Activated CD4-positive, alpha-beta memory T cell treated with anti-CD3 and anti-CD28 coated beads for 36 hours (primary cell): ENCODE measurements at regions of chr6 and their contacts with region 1.

Region 1: DNA sequence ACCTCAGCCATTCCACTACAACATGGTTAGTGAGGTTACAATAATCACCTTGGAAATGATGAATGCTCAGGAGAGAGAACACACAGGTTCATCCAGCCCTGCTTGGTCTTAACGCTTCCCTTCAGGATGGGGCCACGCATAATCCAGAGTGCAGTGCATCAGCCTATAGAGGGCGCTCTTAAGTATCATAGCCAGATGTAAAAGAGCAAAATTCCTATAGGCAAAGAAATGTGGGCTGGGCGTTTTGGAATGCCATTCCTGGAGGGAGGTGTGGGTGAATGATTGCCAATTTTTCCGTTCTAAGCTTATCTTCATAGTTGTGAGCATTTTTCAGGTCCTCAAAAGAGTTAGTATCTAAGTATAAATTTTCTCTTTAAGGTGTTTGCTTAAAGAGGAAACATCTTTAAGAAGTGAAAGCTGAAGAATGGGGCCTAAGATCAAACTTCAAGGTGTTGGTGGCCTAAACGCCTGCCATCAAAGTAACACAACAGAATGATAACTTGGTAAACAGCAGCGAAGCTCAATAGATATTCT is 1.8 kb downstream of the RIPOR2 start:
- DNase-seq: peak; percentile 60
- H3K4me3 Mint-ChIP-seq: peak overlapping the region; percentile 87
- H3K27ac Mint-ChIP-seq: peak overlapping the region; percentile 97
- H3K4me1 Mint-ChIP-seq: peaks cover 87% of the 10 kb centered on the region
- H3K27me3 Mint-ChIP-seq: no peaks in the 10 kb centered on the region

Region 2: DNA sequence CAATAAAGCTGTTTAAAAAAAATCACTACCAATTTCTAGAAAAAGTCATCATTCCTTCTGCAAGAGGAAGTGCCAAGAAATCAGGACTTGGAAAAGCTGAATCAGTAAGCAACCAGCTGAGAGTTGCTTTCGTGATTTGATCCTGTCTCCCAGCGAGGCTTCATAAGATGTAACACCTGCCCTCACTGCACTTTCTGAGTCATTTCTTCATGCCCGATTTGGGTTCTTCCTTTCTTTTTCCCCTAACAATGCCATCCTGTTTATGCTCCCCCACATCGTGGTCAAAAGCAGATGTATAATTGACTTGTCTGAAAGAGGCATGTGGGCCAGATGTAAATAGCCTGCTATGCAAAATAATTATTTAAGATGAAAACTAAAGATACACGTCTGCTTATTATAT is 50.3 kb before region 1 on chr6:
- CTCF ChIA-PET with region 1: interaction called, 53 read pairs
- POLR2A ChIA-PET with region 1: interaction called, 3 read pairs
- intact Hi-C with region 1: loop called (anchors 1 kb)
- DNase-seq: peak; percentile 62
- H3K4me3 Mint-ChIP-seq: peak overlapping the region; percentile 66
- H3K27ac Mint-ChIP-seq: peak overlapping the region; percentile 97
- H3K4me1 Mint-ChIP-seq: peaks cover 86% of the 10 kb centered on the region
- H3K27me3 Mint-ChIP-seq: no peaks in the 10 kb centered on the region

Region 3: GRCh38 chr6:24910961-24911712 is 22.8 kb before region 1 on chr6:
- CTCF ChIA-PET with region 1: interaction called, 109 read pairs
- POLR2A ChIA-PET with region 1: interaction called, 45 read pairs
- intact Hi-C with region 1: loop called (anchors 1 kb)
- DNase-seq: peak; percentile 70
- H3K4me3 Mint-ChIP-seq: peak overlapping the region; percentile 91
- H3K27ac Mint-ChIP-seq: peak overlapping the region; percentile 95
- H3K4me1 Mint-ChIP-seq: peaks cover 85% of the 10 kb centered on the region
- H3K27me3 Mint-ChIP-seq: no peaks in the 10 kb centered on the region

Region 4: GRCh38 chr6:24974182-24975171 is 40.5 kb after region 1 on chr6:
- CTCF ChIA-PET with region 1: interaction called, 31 read pairs
- POLR2A ChIA-PET with region 1: interaction called, 27 read pairs
- intact Hi-C with region 1: loop called (anchors 1 kb)
- DNase-seq: peak; percentile 69
- H3K4me3 Mint-ChIP-seq: peak overlapping the region; percentile 48
- H3K27ac Mint-ChIP-seq: peak overlapping the region; percentile 90
- H3K4me1 Mint-ChIP-seq: peaks cover 64% of the 10 kb centered on the region
- H3K27me3 Mint-ChIP-seq: no peaks in the 10 kb centered on the region

Region 5: DNA sequence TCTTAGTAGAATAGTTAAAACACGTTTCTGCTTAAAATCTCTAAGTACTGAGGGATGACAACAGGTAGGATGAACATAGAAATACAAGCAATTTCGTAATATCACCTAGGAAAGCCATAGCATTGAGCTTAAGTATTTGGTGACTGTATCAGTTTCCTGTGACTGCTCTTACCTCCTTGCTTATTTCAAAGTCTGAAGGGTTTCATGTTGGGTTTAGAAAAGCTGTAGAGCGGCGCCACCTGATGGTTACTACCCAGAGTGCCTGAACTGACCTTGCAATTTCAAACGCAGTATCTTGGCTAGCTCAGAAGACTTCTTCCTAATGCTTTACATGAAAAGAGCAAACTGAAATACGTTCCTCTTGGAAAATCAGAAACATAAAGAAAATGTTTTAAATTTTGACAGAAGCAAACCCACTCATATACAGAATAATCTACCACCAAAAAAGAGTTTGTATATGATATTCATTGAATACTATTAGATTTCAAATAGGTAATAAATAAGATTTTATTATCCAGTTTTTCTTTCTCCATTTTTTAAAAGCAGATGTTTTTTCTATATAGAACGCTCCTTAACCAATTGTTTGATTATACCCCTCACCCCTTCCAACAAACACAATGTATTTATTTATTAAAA is 84.1 kb after region 1 on chr6:
- CTCF ChIA-PET with region 1: interaction called, 57 read pairs
- POLR2A ChIA-PET with region 1: interaction called, 4 read pairs
- intact Hi-C with region 1: loop called (anchors 2 kb)
- DNase-seq: peak; percentile 90
- H3K4me3 Mint-ChIP-seq: peak overlapping the region; percentile 42
- H3K27ac Mint-ChIP-seq: peak overlapping the region; percentile 86
- H3K4me1 Mint-ChIP-seq: peaks cover 69% of the 10 kb centered on the region
- H3K27me3 Mint-ChIP-seq: no peaks in the 10 kb centered on the region

Region 6: GRCh38 chr6:26025894-26026832 is 1092.2 kb after region 1 on chr6:
- CTCF ChIA-PET with region 1: no interaction called
- POLR2A ChIA-PET with region 1: no interaction called
- intact Hi-C with region 1: loop called (anchors 10 kb)
- DNase-seq: peak; percentile 96
- H3K4me3 Mint-ChIP-seq: peak overlapping the region; percentile 87
- H3K27ac Mint-ChIP-seq: peak overlapping the region; percentile 91
- H3K4me1 Mint-ChIP-seq: peaks cover 53% of the 10 kb centered on the region
- H3K27me3 Mint-ChIP-seq: peaks cover 5% of the 10 kb centered on the region